GM10248 (cell line): ENCODE measurements at regions of chr5 and their contacts with region 1.

Region 1: DNA sequence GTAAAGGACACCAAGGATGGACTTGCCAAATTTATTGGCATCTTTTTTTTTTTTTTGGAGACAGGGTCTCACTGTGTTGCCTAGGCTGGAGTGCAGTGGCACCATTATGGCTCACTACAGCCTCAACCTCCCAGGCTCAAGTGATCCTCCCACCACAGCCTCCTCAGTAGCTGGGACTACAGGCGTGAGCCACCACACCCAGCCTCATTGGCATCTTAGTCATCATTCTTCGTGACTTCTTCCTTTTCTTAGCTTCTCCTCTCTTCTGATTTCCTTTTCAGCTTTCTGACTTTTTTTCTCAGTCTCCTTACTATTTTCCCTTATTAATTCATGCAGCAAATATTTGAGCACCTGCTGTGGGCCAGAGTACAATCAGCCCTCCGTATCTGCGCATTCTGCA is 6.1 kb downstream of the MAML1 start:
- DNase-seq: no peak
- CTCF ChIP-seq: no peak

Region 2: GRCh38 chr5:179716286-179716685 is 22.5 kb before region 1 on chr5:
- CTCF ChIA-PET with region 1: no interaction called
- POLR2A ChIA-PET with region 1: no interaction called
- DNase-seq: no peak
- CTCF ChIP-seq: no peak

Region 3: DNA sequence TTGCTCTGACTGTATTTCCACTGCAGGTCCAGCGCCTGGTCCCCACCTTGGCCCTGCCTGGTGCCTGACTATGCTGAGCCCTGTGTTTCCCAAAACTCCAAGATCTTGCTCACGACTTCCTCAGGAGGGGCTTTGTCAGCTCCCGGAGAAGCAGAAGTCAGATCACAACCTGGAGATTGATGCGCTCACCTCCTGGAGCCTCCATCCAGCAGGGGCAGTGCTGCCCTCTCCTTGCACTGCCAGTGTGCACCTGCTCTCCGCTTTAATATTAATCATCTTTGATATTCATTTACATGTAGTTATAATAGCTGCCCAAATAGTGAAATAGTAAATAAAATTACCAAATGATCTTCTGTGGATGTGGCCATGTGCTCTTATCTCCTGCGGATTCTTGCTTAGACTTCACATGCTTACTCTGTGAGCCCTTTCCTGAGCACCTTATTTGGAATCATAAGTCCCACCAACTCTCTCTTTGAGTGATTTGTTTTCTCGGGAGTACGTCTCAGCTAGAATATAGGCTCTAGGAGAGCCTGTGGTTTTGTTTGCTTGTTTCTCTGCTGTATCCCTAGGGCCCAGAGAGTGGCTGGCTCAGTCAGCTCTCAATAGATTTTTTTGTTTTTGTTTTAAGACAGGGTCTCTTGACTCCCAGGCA is 11.2 kb after region 1 on chr5:
- CTCF ChIA-PET with region 1: interaction called, 13 read pairs
- POLR2A ChIA-PET with region 1: no interaction called
- DNase-seq: no peak
- CTCF ChIP-seq: no peak

Region 4: DNA sequence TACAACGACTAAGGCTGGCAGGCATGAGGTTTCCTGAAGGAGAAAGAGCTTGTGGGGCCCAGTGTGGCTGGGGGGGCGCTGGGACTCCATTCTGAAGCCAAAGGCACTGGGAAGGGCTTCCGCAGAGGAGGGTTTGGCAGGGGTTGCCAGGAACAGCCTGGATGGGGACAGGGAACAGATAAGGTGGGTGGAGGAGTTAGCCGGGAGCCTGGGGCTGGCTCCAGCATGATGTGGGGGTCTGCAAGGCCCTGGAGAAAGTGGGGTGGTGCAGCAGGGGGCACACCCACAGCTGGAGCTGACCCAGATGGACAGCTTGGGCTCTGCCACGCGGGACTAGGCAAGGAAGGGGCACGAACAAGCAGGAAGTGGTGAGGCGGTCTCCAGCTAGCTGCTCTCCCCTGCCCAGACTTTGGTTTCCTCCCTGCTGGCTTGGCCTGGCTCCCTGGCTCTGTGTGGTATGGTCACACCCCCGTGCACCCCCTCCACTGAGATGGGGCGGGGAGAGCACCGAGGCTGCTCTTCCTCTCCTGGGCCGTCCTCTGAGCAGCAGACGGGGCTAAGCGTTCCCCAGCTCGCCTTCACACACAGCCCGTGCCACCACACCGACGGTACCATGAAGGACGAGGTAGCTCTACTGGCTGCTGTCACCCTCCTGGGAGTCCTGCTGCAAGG is 54.9 kb after region 1 on chr5 and contains the start of gene LTC4S:
- CTCF ChIA-PET with region 1: no interaction called
- POLR2A ChIA-PET with region 1: no interaction called
- DNase-seq: no peak
- CTCF ChIP-seq: no peak